ENCODE measurements at regions of chr6 and their contacts with region 1.

Region 1: GRCh38 chr6:138765896-138766655 is 7.5 kb upstream of the CCDC28A start:
- DNase-seq: no peak
- ATAC-seq: no peak

Region 2: GRCh38 chr6:137363805-137364138 is 1402.3 kb before region 1 on chr6:
- intact Hi-C with region 1: no loop called
- DNase-seq: no peak
- ATAC-seq: no peak

Region 3: GRCh38 chr6:138590796-138591709 is 175.0 kb before region 1 on chr6:
- intact Hi-C with region 1: loop called in 1 of 2 experiments (anchors 10 kb)
- DNase-seq: peak; percentile 54 to 69
- ATAC-seq: peak; percentile 76

Region 4: DNA sequence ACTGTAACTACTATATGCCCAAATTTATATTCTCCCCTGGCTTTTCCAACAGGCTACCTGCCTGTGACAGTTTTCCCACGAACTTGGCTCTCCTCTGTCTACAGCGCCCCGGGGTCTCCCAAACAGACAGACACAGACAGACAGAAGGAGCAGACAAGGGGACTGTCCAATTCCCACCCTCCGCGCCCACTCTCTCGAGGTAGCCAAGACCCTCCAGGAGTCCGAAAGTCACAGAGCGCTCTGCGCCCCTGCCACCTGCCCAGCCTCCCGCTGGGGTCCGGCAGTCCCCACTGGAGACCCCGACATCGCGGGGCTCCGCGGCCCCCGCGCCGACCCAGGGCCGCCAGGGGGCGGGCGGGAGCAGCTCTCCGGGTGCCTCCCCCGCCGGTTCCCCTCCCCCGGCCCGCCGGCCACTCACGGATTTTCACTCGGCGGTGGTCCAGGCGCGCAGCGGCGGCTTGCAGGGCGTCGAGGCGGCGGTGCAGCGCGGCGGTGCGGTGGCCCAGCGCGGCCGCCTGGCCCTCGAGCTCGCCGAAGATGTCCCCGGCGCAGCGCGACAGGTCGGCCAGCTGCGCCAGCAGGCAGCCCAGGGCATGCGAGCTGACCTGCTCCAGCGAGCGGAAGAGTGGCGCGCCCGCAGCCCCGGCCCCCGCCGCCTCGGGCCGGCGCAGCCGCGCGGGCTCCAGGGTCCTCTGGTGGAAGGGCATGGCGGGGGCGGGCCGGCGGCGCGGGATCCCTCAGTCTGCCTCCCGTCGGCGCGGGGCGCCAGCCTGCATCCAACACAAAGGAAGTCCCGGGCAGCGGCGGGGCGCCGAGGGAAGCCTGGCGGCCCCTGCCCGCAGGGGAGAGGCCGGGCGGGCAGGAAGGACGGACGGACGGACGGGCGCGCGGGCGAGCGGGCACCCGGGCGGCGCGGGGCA is 73.8 kb before region 1 on chr6:
- intact Hi-C with region 1: no loop called
- DNase-seq: peak; percentile 51 to 82
- ATAC-seq: peak; percentile 64